ENCODE measurements at regions of chr9 and their contacts with region 1.

Region 1: GRCh38 chr9:98974994-98975712 is 31.4 kb downstream of the COL15A1 start:
- DNase-seq: peak; percentile 93
- ATAC-seq: peak; percentile 75

Region 2: GRCh38 chr9:99019790-99020331 is 44.7 kb after region 1 on chr9:
- intact Hi-C with region 1: no loop called
- DNase-seq: no peak
- ATAC-seq: peak; percentile 46

Region 3: DNA sequence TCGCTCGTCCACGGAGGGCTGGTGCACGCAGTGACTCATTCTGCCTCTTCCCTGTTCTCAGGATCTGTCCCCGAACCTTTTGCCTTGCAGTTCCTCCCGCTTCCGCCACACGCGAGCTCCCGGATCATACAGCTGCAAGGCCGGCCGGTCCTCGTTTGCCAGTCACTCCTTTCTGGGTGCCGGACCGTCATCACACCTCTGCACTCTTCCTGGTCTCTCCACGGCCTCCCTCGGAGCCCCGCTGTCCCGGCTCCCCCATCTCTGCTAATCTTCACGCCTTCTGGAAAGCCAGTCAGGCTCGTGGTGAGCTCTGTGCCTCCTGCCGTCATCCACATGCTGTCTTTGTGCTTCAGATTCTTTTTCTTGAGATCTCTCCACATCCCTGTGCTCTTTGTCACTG is 1023.1 kb after region 1 on chr9:
- intact Hi-C with region 1: loop called (anchors 5 kb)
- DNase-seq: no peak
- ATAC-seq: no peak